AG04449 (cell line): ENCODE measurements at regions of chr16 and their contacts with region 1.

Region 1: DNA sequence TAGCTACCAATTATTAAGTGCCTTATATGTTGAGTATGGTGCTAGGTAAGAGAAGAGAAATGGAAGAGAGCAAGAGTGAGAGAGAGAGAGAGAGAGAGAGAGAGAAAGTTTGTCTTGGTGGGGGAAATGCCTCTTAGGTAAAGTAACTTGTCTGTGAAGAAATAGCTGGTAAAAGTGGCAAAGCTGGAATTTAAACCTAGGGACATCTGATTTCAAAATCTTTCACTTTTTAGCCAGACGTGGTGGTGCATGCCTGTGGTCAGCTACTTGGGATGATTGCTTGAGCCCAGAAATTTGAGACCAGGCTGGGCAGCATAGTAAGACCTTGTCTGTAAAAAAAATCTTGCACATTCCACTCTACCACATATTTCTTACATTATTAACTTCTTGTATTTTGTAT is 23.0 kb upstream of the CDR2 start:
- DNase-seq: peak; percentile 98
- H3K4me3 ChIP-seq: no peak overlapping the region
- CTCF ChIP-seq: no peak

Region 2: DNA sequence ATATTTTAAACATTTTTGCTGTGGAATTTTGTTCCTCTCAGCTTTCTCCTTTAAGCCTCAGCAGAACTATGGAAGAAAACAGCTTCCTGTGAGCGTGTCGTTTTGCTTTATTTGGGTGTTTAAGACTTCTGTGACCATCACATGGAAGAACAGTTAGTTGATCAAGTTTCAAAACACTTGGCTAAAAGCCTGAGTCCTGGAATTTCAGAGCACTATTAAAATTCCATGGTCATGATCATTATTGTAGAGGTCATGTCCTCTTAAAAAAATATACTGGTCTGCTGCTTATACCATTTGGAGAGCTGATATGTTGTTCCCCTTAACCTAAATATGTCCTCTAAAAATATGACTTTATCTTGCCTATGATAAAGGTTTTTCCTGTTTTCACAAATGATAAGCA is 10.5 kb before region 1 on chr16:
- CTCF ChIA-PET with region 1: no interaction called
- POLR2A ChIA-PET with region 1: interaction called, 25 read pairs
- DNase-seq: peak; percentile 89
- H3K4me3 ChIP-seq: no peak overlapping the region
- CTCF ChIP-seq: no peak

Region 3: GRCh38 chr16:22427556-22427955 is 30.1 kb after region 1 on chr16:
- CTCF ChIA-PET with region 1: no interaction called
- POLR2A ChIA-PET with region 1: no interaction called
- DNase-seq: no peak
- H3K4me3 ChIP-seq: no peak overlapping the region
- CTCF ChIP-seq: no peak

Region 4: GRCh38 chr16:22813223-22813945 is 415.9 kb after region 1 on chr16:
- CTCF ChIA-PET with region 1: no interaction called
- POLR2A ChIA-PET with region 1: no interaction called
- DNase-seq: no peak
- H3K4me3 ChIP-seq: peak overlapping the region; percentile 12; the same call in 1 of the 2 replicates
- CTCF ChIP-seq: peak; percentile 87